Caco-2 (cell line): ENCODE measurements at regions of chr14 and their contacts with region 1.

Region 1: DNA sequence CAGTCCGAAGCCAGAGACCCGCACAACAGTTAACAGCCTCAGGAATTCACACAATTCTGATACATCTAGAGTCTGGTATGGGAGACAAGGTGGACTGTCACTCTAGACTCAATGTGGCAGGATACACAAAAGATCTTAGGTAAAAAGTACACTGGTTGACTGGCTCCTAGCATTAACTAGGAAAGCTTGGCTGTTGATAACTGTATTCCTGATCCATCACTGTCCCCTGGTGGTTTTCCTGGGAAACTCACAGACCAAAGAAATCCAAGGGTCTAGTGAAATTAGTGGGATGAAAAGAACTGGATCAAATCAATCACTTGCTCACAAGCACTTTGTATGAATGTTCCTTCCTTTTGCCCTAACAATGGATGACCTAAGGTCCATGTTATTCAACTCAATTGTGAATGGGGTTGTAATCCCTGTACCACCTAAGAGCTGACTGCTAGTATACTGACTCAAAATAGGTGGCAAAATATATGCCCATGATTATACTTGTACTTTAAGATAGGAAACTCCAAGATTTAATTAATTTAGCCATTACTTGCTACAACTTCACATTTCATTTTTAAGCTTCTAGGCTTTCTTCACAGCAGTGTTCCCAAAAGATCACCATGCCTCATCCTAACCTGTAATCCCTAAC is 14.0 kb downstream of the NPC2 start:
- DNase-seq: peak in 1 of 2 experiments; percentile 55
- H3K4me3 ChIP-seq: no peak overlapping the region
- H3K4me3 Mint-ChIP-seq: no peak overlapping the region
- H3K27ac Mint-ChIP-seq: no peak overlapping the region
- H3K4me1 ChIP-seq: no peaks in the 10 kb centered on the region; the same call in 1 of the 2 replicates
- H3K4me1 Mint-ChIP-seq: no peaks in the 10 kb centered on the region
- H3K27me3 ChIP-seq: no peaks in the 10 kb centered on the region
- H3K27me3 Mint-ChIP-seq: no peaks in the 10 kb centered on the region
- CTCF ChIP-seq: peak; percentile 72 to 84

Region 2: GRCh38 chr14:74324931-74325361 is 154.2 kb before region 1 on chr14:
- CTCF ChIA-PET with region 1: no interaction called
- POLR2A ChIA-PET with region 1: interaction called, 6 read pairs
- intact Hi-C with region 1: loop called (anchors 1 kb)
- DNase-seq: peak in 1 of 2 experiments; percentile 51
- H3K4me3 ChIP-seq: no peak overlapping the region
- H3K4me3 Mint-ChIP-seq: no peak overlapping the region
- H3K27ac Mint-ChIP-seq: no peak overlapping the region
- H3K4me1 ChIP-seq: peaks cover 8% of the 10 kb centered on the region
- H3K4me1 Mint-ChIP-seq: peaks cover 19% of the 10 kb centered on the region
- H3K27me3 ChIP-seq: no peaks in the 10 kb centered on the region
- H3K27me3 Mint-ChIP-seq: peaks cover 4% of the 10 kb centered on the region
- CTCF ChIP-seq: peak; percentile 76 to 78

Region 3: DNA sequence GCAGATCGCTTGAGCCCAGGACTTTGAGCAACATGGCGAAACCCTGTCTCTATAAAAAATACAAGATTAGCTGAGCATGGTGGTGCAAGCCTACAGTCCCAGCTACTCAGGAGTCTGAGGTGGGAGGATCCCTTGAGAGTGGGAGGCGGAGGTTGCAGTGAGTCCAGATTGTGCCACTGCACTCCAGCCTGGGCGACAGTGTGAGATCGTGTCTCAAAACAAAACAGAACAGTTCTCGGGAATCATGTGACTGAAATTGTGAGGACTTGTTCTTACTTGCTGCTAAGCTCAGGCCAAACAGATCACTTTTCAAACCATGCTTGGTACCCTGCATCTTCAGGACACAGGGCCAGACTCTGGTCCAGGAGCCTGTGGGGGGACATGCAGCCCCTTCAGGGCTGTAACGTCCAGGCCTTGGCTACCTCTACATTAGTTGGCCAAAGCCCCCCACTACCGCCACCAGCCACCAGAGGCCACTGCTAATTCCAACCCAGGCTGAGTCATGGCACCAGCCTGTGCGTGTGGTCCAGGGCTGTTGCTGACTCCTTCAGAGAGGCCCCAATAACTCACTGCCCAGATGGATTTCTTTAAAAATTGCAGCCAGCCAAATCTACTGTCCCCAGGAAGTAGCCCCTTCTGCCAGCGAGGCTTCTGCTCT is 19.7 kb before region 1 on chr14:
- CTCF ChIA-PET with region 1: no interaction called
- POLR2A ChIA-PET with region 1: no interaction called
- intact Hi-C with region 1: no loop called
- DNase-seq: peak in 1 of 2 experiments; percentile 61
- H3K4me3 ChIP-seq: no peak overlapping the region
- H3K4me3 Mint-ChIP-seq: no peak overlapping the region
- H3K27ac Mint-ChIP-seq: no peak overlapping the region
- H3K4me1 ChIP-seq: no peaks in the 10 kb centered on the region
- H3K4me1 Mint-ChIP-seq: no peaks in the 10 kb centered on the region
- H3K27me3 ChIP-seq: no peaks in the 10 kb centered on the region
- H3K27me3 Mint-ChIP-seq: no peaks in the 10 kb centered on the region
- CTCF ChIP-seq: peak; percentile 52 to 75

Region 4: DNA sequence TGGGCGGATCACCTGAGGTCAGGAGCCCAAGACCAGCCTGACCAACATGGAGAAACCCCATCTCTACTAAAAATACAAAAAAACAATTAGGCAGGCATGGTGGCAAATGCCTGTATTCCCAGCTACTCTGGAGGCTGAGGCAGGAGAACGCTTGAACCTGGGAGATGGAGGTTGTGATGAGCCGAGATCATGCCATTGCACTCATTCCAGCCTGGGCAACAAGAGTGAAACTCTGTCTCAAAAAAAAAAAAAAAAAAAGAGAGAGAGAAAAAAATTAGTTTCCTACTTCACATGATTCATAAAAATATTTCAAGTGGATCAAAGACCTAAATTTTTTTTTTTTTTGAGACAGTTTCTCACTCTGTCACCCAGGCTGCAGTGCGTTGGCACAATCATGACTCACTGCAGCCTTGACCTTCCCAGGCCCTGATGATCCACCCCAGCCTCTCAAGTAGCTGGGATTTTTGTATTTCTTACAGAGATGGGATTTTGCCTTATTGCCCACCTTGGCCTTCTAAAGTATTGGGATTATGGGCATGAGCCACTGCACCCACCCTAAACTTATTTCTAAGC is 258.7 kb after region 1 on chr14:
- CTCF ChIA-PET with region 1: no interaction called
- POLR2A ChIA-PET with region 1: no interaction called
- intact Hi-C with region 1: no loop called
- DNase-seq: no peak
- H3K4me3 ChIP-seq: no peak overlapping the region
- H3K4me3 Mint-ChIP-seq: no peak overlapping the region
- H3K27ac Mint-ChIP-seq: no peak overlapping the region
- H3K4me1 ChIP-seq: peaks cover 4% of the 10 kb centered on the region; the same call in 1 of the 2 replicates
- H3K4me1 Mint-ChIP-seq: peaks cover 15% of the 10 kb centered on the region
- H3K27me3 ChIP-seq: no peaks in the 10 kb centered on the region
- H3K27me3 Mint-ChIP-seq: no peaks in the 10 kb centered on the region
- CTCF ChIP-seq: no peak